GM12878 (cell line): ENCODE measurements at regions of chr6 and their contacts with region 1.

Region 1: GRCh38 chr6:139375232-139376016 is 976 bp upstream of the CITED2 start:
- DNase-seq: peak; percentile 65
- ATAC-seq: peak; percentile 69
- H3K4me3 ChIP-seq: peak overlapping the region; percentile 93
- H3K27ac ChIP-seq: peak overlapping the region; percentile 81
- H3K4me1 ChIP-seq: no peaks in the 10 kb centered on the region
- H3K27me3 ChIP-seq: no peaks in the 10 kb centered on the region
- CTCF ChIP-seq: no peak
- EP300 ChIP-seq: 0 out of 4 replicates have a peak, but pooled peaks of 1 of the 2 experiments have one; percentile 52
- POLR2A ChIP-seq: peak; percentile 69; the same call in 1 of the 2 replicates
- RAD21 ChIP-seq: peak; percentile 33

Region 2: GRCh38 chr6:138600726-138601125 is 774.7 kb before region 1 on chr6:
- CTCF ChIA-PET with region 1: no interaction called
- POLR2A ChIA-PET with region 1: no interaction called
- RAD21 ChIA-PET with region 1: no interaction called
- SMC1A ChIA-PET with region 1: no interaction called
- in situ Hi-C with region 1: no loop called
- intact Hi-C with region 1: no loop called
- DNase-seq: no peak
- ATAC-seq: no peak
- H3K4me3 ChIP-seq: no peak overlapping the region
- H3K27ac ChIP-seq: no peak overlapping the region
- H3K4me1 ChIP-seq: no peaks in the 10 kb centered on the region
- H3K27me3 ChIP-seq: no peaks in the 10 kb centered on the region
- CTCF ChIP-seq: no peak
- EP300 ChIP-seq: no peak
- POLR2A ChIP-seq: no peak
- RAD21 ChIP-seq: no peak

Region 3: GRCh38 chr6:139291813-139292619 is 83.4 kb before region 1 on chr6 and contains the start of gene TXLNB:
- CTCF ChIA-PET with region 1: interaction called, 15 read pairs
- POLR2A ChIA-PET with region 1: interaction called, 6 read pairs
- RAD21 ChIA-PET with region 1: interaction called, 11 read pairs
- SMC1A ChIA-PET with region 1: interaction called, 8 read pairs
- in situ Hi-C with region 1: no loop called
- intact Hi-C with region 1: no loop called
- DNase-seq: peak; percentile 83
- ATAC-seq: peak; percentile 88
- H3K4me3 ChIP-seq: peak within 1 kb of the TSS; percentile 40
- H3K27ac ChIP-seq: peak within 1 kb of the TSS; percentile 88
- H3K4me1 ChIP-seq: peaks cover 35% of the 10 kb centered on the region
- H3K27me3 ChIP-seq: no peaks in the 10 kb centered on the region
- CTCF ChIP-seq: no peak
- EP300 ChIP-seq: peak; percentile 46 to 81; a peak in 2 of 4 replicates
- POLR2A ChIP-seq: 0 out of 2 replicates have a peak, but pooled peaks have one; percentile 51
- RAD21 ChIP-seq: no peak; the same call in 1 of the 2 replicates
- polyA plus RNA-seq, gene TXLNB: 0.07 to 0.10 TPM

Region 4: DNA sequence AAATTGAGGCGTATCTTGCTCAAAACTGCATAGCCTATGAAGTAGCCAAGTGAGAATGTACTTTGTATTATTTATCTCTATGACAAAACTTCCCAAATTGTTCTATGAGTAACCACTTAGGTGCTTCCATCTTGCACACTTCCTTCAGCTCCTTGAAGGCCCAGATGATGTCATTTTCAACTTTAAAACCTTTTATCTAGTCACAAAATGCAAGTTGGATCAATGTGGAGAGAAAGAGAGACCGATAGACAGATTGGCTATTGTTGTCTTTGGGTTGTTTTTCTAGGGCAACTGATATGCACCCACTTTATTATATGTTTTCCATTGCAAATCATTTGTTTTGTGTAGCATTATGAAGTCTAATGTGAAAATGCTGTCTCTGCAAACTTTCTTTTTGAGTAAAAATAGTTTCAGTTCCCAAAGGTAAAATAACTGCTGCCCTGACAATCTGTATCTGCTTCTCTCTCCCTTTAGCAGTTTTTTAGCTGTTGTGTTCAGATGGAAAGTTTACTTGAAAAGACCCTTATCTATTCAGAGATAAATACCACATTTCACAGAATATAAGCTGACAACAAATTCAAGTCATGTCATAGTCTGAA is 72.7 kb after region 1 on chr6:
- CTCF ChIA-PET with region 1: interaction called, 3 read pairs
- POLR2A ChIA-PET with region 1: no interaction called
- RAD21 ChIA-PET with region 1: interaction called, 23 read pairs
- SMC1A ChIA-PET with region 1: interaction called, 14 read pairs
- in situ Hi-C with region 1: no loop called
- intact Hi-C with region 1: no loop called
- DNase-seq: peak; percentile 55
- ATAC-seq: peak; percentile 93
- H3K4me3 ChIP-seq: no peak overlapping the region
- H3K27ac ChIP-seq: peak overlapping the region; percentile 25
- H3K4me1 ChIP-seq: peaks cover 6% of the 10 kb centered on the region; the same call in 1 of the 2 replicates
- H3K27me3 ChIP-seq: no peaks in the 10 kb centered on the region
- CTCF ChIP-seq: no peak
- EP300 ChIP-seq: peak in 1 of 2 experiments; percentile 88; a peak in 3 of 4 replicates
- POLR2A ChIP-seq: no peak
- RAD21 ChIP-seq: peak; percentile 9; the same call in 1 of the 2 replicates

Region 5: DNA sequence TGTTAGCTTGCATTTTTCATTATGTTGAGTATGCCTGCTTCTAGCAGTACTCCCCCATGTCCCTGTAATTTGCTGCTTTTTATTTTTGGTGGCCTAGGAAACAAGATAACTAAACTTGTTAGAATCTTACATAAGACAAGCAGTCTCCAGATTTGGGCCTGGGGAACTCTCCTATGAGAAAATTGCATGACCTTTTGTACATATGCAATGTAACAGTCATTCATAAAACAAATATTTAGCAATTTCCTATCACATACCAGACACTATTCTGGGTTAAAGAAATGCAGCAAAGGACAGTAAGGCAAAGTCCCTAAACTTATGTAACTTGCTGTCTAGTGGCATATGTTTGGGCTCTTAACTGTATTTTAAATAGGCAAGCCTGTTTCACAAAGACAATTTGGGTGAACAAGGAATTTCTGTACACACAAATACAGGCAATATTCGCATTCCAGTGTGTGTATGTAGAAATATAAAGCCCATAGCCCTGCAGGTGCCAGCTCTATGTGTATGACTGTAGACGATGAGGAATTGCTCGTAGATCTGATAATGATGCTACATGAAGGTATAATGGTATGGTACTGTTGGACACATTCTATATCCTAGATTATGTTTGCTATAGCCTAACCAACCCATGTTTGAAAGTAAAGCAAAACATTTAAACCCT is 304.2 kb after region 1 on chr6:
- CTCF ChIA-PET with region 1: no interaction called
- POLR2A ChIA-PET with region 1: no interaction called
- RAD21 ChIA-PET with region 1: no interaction called
- SMC1A ChIA-PET with region 1: interaction called, 3 read pairs
- in situ Hi-C with region 1: no loop called
- intact Hi-C with region 1: loop called (anchors 10 kb)
- DNase-seq: no peak
- ATAC-seq: no peak
- H3K4me3 ChIP-seq: no peak overlapping the region
- H3K27ac ChIP-seq: no peak overlapping the region
- H3K4me1 ChIP-seq: no peaks in the 10 kb centered on the region
- H3K27me3 ChIP-seq: no peaks in the 10 kb centered on the region
- CTCF ChIP-seq: no peak
- EP300 ChIP-seq: no peak
- POLR2A ChIP-seq: no peak
- RAD21 ChIP-seq: no peak

Region 6: DNA sequence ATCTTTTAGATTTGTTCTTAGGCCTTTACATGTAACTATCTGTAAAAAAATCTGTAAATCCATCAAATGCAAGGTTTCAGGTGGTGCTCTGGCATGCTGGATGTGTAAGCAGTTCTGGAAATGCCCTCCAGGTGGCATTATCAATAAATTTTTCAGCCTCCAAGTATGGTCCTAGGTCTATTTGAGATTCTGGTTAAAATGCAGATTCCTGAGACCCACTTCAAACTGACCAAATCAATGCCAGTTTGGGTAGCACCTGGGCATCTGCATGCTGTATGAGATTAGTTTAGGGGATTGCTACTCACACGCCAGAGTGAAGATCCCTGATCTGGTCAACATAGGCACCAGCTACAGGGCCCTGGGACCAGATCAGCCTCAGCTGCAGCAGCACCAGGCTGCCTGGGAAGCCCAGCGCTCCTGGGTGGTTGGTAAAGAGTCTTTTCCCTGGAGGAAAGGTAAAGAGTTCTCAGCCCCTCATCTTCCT is 506.3 kb after region 1 on chr6:
- CTCF ChIA-PET with region 1: interaction called, 28 read pairs
- POLR2A ChIA-PET with region 1: no interaction called
- RAD21 ChIA-PET with region 1: interaction called, 24 read pairs
- SMC1A ChIA-PET with region 1: interaction called, 21 read pairs
- in situ Hi-C with region 1: no loop called
- intact Hi-C with region 1: loop called (anchors 5 kb)
- DNase-seq: no peak
- ATAC-seq: peak; percentile 92
- H3K4me3 ChIP-seq: no peak overlapping the region
- H3K27ac ChIP-seq: no peak overlapping the region
- H3K4me1 ChIP-seq: peaks cover 12% of the 10 kb centered on the region
- H3K27me3 ChIP-seq: no peaks in the 10 kb centered on the region
- CTCF ChIP-seq: peak; percentile 46 to 56 (median 55)
- EP300 ChIP-seq: no peak
- POLR2A ChIP-seq: no peak
- RAD21 ChIP-seq: peak; percentile 52

Region 7: DNA sequence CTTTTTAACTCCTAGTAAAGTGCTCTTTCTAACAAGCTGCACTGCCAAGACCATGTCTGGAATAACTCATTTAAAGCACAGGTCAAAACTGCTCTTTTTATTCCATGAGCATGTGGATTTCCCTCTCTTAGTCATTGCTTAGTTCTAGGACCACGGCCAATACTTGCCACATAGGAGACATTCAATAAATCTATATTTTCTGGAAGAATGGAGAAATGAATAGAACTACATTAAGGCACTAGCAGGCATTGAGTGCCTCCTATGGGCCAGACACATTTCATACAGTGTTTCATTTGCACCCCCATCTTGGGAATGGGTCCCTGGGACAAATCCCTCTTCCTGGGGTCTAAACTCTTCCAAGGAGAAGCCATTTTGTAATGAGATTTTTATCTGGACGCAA is 551.8 kb after region 1 on chr6:
- CTCF ChIA-PET with region 1: interaction called, 14 read pairs
- POLR2A ChIA-PET with region 1: no interaction called
- RAD21 ChIA-PET with region 1: interaction called, 22 read pairs
- SMC1A ChIA-PET with region 1: interaction called, 20 read pairs
- in situ Hi-C with region 1: loop called (anchors 5 kb)
- intact Hi-C with region 1: loop called (anchors 2 kb)
- DNase-seq: no peak
- ATAC-seq: 0 out of 3 replicates have a peak, but pooled peaks have one; percentile 27
- H3K4me3 ChIP-seq: no peak overlapping the region
- H3K27ac ChIP-seq: no peak overlapping the region
- H3K4me1 ChIP-seq: no peaks in the 10 kb centered on the region
- H3K27me3 ChIP-seq: no peaks in the 10 kb centered on the region
- CTCF ChIP-seq: peak; percentile 28 to 48 (median 31); a peak in 4 of 6 replicates
- EP300 ChIP-seq: no peak
- POLR2A ChIP-seq: no peak
- RAD21 ChIP-seq: peak; percentile 62

Region 8: GRCh38 chr6:140441256-140441655 is 1065.8 kb after region 1 on chr6:
- CTCF ChIA-PET with region 1: interaction called, 8 read pairs
- POLR2A ChIA-PET with region 1: interaction called, 3 read pairs
- RAD21 ChIA-PET with region 1: interaction called, 16 read pairs
- SMC1A ChIA-PET with region 1: interaction called, 17 read pairs
- in situ Hi-C with region 1: no loop called
- intact Hi-C with region 1: loop called (anchors 2 kb)
- DNase-seq: no peak
- ATAC-seq: peak; percentile 52; the same call in 2 of the 3 replicates
- H3K4me3 ChIP-seq: no peak overlapping the region
- H3K27ac ChIP-seq: no peak overlapping the region
- H3K4me1 ChIP-seq: no peaks in the 10 kb centered on the region
- H3K27me3 ChIP-seq: no peaks in the 10 kb centered on the region
- CTCF ChIP-seq: peak in 2 of 3 experiments; percentile 15 to 36; a peak in 2 of 6 replicates
- EP300 ChIP-seq: no peak
- POLR2A ChIP-seq: no peak
- RAD21 ChIP-seq: peak; percentile 76